Activated CD4-positive, alpha-beta T cell treated with anti-CD3 and anti-CD28 coated beads for 36 hours (primary cell): ENCODE measurements at regions of chr10 and their contacts with region 1.

Region 1: GRCh38 chr10:6667679-6668270 is 87.7 kb upstream of the PRKCQ start:
- DNase-seq: peak; percentile 73
- ATAC-seq: peak; percentile 25
- H3K4me3 Mint-ChIP-seq: no peak overlapping the region
- H3K27ac Mint-ChIP-seq: no peak overlapping the region
- H3K4me1 Mint-ChIP-seq: peaks cover 25% of the 10 kb centered on the region
- H3K27me3 Mint-ChIP-seq: no peaks in the 10 kb centered on the region

Region 2: DNA sequence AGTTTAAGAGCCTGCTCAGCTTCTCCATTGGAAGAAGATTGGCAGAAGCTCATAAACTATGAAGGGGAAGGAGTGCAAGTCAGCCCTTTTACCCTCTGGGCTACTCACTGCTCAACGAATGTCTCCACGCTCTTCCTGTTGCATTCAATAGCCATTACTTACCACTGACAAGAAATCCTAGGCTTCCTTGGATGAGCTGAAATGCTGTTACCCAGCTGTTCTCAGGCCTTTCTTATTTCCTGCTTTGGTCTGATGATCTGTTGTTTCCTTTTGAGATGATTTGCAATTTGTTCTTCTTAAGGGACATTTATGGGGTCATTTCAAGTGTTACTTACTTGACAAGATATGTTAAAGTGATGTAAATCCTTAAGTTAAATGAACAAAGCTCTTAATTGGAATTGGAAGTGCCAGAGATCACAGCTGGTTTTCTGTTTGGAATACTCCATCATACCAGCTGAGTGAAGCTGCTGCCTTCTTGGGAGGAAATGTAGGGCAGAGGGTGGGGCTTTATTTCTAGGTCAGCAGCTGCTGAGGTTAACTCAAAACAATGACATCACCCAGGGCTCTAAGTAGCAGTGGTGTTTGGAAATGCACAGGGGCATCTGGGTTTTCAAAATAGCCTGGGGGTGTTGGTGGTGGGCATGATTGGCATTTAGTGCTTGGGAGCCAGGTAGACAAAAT is 257.7 kb before region 1 on chr10:
- CTCF ChIA-PET with region 1: interaction called, 21 read pairs
- POLR2A ChIA-PET with region 1: no interaction called
- intact Hi-C with region 1: no loop called
- DNase-seq: peak; percentile 28
- ATAC-seq: peak; percentile 72
- H3K4me3 Mint-ChIP-seq: peak overlapping the region; percentile 47
- H3K27ac Mint-ChIP-seq: peak overlapping the region; percentile 76
- H3K4me1 Mint-ChIP-seq: peaks cover 43% of the 10 kb centered on the region
- H3K27me3 Mint-ChIP-seq: peaks cover 3% of the 10 kb centered on the region

Region 3: GRCh38 chr10:6416892-6417512 is 250.8 kb before region 1 on chr10:
- CTCF ChIA-PET with region 1: interaction called, 21 read pairs
- POLR2A ChIA-PET with region 1: no interaction called
- intact Hi-C with region 1: loop called (anchors 1 kb)
- DNase-seq: no peak
- ATAC-seq: peak; percentile 73
- H3K4me3 Mint-ChIP-seq: no peak overlapping the region
- H3K27ac Mint-ChIP-seq: no peak overlapping the region
- H3K4me1 Mint-ChIP-seq: no peaks in the 10 kb centered on the region
- H3K27me3 Mint-ChIP-seq: no peaks in the 10 kb centered on the region

Region 4: DNA sequence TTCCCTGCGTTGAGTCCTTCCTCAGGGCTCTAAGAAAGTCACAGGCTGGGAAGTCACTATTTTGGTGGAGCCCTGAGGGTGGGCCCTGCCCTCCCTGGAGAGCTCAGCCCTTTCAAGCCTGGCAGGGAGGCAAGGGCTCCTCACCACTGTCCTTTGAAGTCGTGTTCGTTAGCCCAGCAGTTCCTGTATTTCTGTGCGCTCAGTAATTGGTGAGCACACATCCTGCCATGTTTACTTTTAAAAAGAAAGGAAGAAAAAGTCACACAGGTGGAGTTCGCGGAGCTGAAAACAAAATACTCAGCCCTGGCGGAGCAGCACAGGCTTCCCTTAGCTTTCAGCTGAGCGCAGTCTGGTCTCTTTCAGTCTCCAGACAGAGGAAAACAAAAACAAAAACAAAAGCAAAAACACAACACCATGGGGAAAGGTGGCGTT is 124.8 kb before region 1 on chr10:
- CTCF ChIA-PET with region 1: interaction called, 15 read pairs
- POLR2A ChIA-PET with region 1: interaction called, 3 read pairs
- intact Hi-C with region 1: loop called in 1 of 2 experiments (anchors 1 kb)
- DNase-seq: peak; percentile 58
- ATAC-seq: peak; percentile 62
- H3K4me3 Mint-ChIP-seq: peak overlapping the region; percentile 75
- H3K27ac Mint-ChIP-seq: peak overlapping the region; percentile 96
- H3K4me1 Mint-ChIP-seq: peaks cover 76% of the 10 kb centered on the region
- H3K27me3 Mint-ChIP-seq: no peaks in the 10 kb centered on the region

Region 5: DNA sequence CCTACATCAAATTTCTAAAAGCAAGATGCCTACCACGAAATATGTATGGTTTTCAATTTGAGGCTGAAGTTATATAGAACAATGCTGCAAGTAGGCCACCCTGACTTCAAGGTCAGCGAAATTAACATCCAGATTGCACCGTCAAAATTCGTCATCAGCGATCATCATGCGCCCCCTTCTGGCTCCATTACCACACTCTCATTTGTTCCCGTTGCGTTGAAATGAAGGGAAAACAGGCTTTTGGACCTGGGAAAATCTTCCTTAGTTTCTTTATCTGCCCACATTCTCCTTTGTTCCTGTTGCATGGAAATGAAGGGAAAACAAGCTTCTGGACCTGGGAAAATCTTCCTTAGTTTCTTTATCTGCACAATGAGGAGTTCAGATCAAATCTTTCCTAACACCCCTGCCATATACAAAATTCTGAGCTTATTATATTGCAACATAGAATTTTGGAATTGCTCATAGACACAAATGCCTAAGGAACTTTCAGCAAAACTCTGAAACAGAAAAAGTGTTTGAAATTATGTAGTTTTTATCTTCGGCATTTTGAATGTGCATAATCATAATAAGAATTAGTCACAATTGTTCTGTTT is 10.5 kb after region 1 on chr10:
- CTCF ChIA-PET with region 1: interaction called, 65 read pairs
- POLR2A ChIA-PET with region 1: no interaction called
- intact Hi-C with region 1: no loop called
- DNase-seq: peak; percentile 80
- ATAC-seq: peak; percentile 39
- H3K4me3 Mint-ChIP-seq: no peak overlapping the region
- H3K27ac Mint-ChIP-seq: no peak overlapping the region
- H3K4me1 Mint-ChIP-seq: peaks cover 6% of the 10 kb centered on the region
- H3K27me3 Mint-ChIP-seq: no peaks in the 10 kb centered on the region

Region 6: GRCh38 chr10:7410862-7411670 is 743.3 kb after region 1 on chr10 and contains the start of gene SFMBT2:
- CTCF ChIA-PET with region 1: no interaction called
- POLR2A ChIA-PET with region 1: no interaction called
- intact Hi-C with region 1: loop called (anchors 1 to 5 kb)
- DNase-seq: peak; percentile 80
- ATAC-seq: peak; percentile 42
- H3K4me3 Mint-ChIP-seq: peak within 1 kb of the TSS; percentile 94
- H3K27ac Mint-ChIP-seq: peak within 1 kb of the TSS; percentile 93
- H3K4me1 Mint-ChIP-seq: peaks cover 40% of the 10 kb centered on the region
- H3K27me3 Mint-ChIP-seq: peaks cover 10% of the 10 kb centered on the region
- total RNA-seq, gene SFMBT2: 17.6 to 18.0 TPM

Region 7: GRCh38 chr10:7417103-7417623 is 749.4 kb after region 1 on chr10:
- CTCF ChIA-PET with region 1: no interaction called
- POLR2A ChIA-PET with region 1: no interaction called
- intact Hi-C with region 1: loop called (anchors 1 to 5 kb)
- DNase-seq: no peak
- ATAC-seq: peak; percentile 37
- H3K4me3 Mint-ChIP-seq: no peak overlapping the region
- H3K27ac Mint-ChIP-seq: peak overlapping the region; percentile 34
- H3K4me1 Mint-ChIP-seq: peaks cover 26% of the 10 kb centered on the region
- H3K27me3 Mint-ChIP-seq: peaks cover 9% of the 10 kb centered on the region